A549 (cell line): ENCODE measurements at regions of chr10 and their contacts with region 1.

Region 1: DNA sequence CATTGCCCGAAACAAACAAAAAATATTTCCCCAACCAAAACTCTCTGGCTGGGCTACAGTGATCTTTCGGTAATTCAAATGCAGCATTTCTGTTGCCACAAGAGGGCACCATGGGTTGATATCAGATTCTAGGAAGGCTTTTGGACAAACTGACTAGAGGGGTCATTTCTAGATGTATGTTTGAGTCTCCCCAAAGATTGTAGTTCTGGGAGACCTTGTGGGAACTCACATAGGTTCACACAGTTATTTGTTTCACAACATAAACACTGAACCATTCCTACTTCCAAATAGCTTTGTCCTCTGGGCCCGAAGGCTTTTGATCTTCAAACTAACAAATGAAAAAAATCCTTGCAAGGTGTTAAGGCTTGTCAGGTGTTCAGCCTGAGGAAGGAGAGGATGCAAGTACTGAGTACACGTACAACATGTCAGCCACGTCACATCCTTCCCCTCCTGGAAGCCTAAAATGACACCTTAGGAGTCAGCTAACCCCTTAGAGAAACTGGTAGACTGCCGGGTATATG is 37.0 kb upstream of the IL15RA start:
- DNase-seq: peak; percentile 40 to 55
- ATAC-seq: peak; percentile 74 to 89; a peak in 4 of 6 replicates
- H3K4me3 ChIP-seq: no peak overlapping the region
- H3K27ac ChIP-seq: no peak overlapping the region; a peak in 1 of 6 replicates
- H3K4me1 ChIP-seq: no peaks in the 10 kb centered on the region
- CTCF ChIP-seq: peak; percentile 80
- EP300 ChIP-seq: no peak
- POLR2A ChIP-seq: no peak
- RAD21 ChIP-seq: peak; percentile 56 to 63

Region 2: GRCh38 chr10:5873515-5873995 is 140.7 kb before region 1 on chr10:
- CTCF ChIA-PET with region 1: no interaction called
- POLR2A ChIA-PET with region 1: no interaction called
- DNase-seq: peak; percentile 71 to 82
- ATAC-seq: peak; percentile 86 to 92
- H3K4me3 ChIP-seq: no peak overlapping the region
- H3K27ac ChIP-seq: no peak overlapping the region
- H3K4me1 ChIP-seq: no peaks in the 10 kb centered on the region
- CTCF ChIP-seq: peak; percentile 81
- EP300 ChIP-seq: no peak
- POLR2A ChIP-seq: no peak
- RAD21 ChIP-seq: peak; percentile 57 to 65

Region 3: DNA sequence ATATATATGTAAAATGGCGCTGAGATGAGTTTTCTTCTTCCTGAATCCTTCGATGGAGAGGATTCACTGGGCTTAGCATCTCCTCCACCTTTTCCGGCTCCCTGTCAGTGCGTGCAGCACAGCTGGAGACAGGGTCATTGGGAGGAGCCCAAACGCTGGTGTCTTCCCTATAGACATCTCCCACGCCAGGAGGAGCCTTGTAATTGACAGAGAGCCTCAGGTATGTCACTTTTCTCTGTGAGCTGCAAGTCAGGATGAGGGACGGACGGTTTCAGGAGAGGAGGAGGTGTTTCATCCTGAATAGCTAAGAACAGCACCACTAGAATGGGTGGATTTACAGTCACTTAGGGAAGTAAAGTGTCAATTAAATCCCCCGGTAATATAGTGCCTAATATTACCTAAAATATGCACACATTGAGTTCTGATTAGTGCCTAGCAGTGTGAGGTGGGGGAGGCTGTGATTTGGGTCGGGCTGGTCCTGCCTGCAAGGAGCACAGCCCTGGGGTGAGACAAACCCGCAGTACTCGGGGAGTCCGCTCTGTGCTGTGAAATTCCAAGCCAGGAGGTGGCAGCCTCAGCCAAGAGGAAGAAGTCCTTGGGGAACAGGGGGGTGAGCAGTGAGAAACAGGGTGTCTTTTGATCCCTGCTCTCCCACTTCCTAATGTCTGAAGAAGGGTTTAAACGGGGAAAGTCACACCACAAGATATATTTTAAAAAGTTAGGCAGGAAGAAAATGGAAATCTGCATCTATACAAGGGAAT is 65.1 kb before region 1 on chr10:
- CTCF ChIA-PET with region 1: interaction called, 13 read pairs
- POLR2A ChIA-PET with region 1: no interaction called
- DNase-seq: peak; percentile 62 to 73
- ATAC-seq: peak; percentile 82 to 92
- H3K4me3 ChIP-seq: no peak overlapping the region
- H3K27ac ChIP-seq: no peak overlapping the region
- H3K4me1 ChIP-seq: peaks cover 28% of the 10 kb centered on the region
- CTCF ChIP-seq: peak; percentile 64
- EP300 ChIP-seq: no peak
- POLR2A ChIP-seq: no peak
- RAD21 ChIP-seq: peak; percentile 79 to 88

Region 4: GRCh38 chr10:6030217-6030616 is 15.9 kb after region 1 on chr10:
- CTCF ChIA-PET with region 1: interaction called, 14 read pairs
- POLR2A ChIA-PET with region 1: no interaction called
- DNase-seq: no peak
- ATAC-seq: no peak
- H3K4me3 ChIP-seq: no peak overlapping the region
- H3K27ac ChIP-seq: no peak overlapping the region
- H3K4me1 ChIP-seq: no peaks in the 10 kb centered on the region
- CTCF ChIP-seq: no peak
- EP300 ChIP-seq: no peak
- POLR2A ChIP-seq: no peak
- RAD21 ChIP-seq: no peak

Region 5: GRCh38 chr10:6050801-6051445 is 36.6 kb after region 1 on chr10:
- CTCF ChIA-PET with region 1: interaction called, 11 read pairs
- POLR2A ChIA-PET with region 1: no interaction called
- DNase-seq: peak; percentile 33 to 39
- ATAC-seq: peak; percentile 60 to 80
- H3K4me3 ChIP-seq: peak overlapping the region; percentile 41
- H3K27ac ChIP-seq: peak overlapping the region; percentile 46 to 63; a peak in 5 of 6 replicates
- H3K4me1 ChIP-seq: peaks cover 5% of the 10 kb centered on the region; the same call in 1 of the 3 replicates
- CTCF ChIP-seq: peak; percentile 42
- EP300 ChIP-seq: no peak
- POLR2A ChIP-seq: no peak
- RAD21 ChIP-seq: peak; percentile 55 to 58